ENCODE measurements at regions of chr3 and their contacts with region 1.

Region 1: GRCh38 chr3:71725279-71725991 is at the start of gene EIF4E3:
- DNase-seq: peak; percentile 52
- ATAC-seq: peak; percentile 34
- H3K4me3 Mint-ChIP-seq: peak within 1 kb of the TSS; percentile 78
- H3K27ac Mint-ChIP-seq: no peak within 1 kb of the TSS
- H3K4me1 Mint-ChIP-seq: peaks cover 40% of the 10 kb centered on the region
- H3K27me3 Mint-ChIP-seq: peaks cover 35% of the 10 kb centered on the region
- CTCF ChIP-seq: no peak
- total RNA-seq, gene EIF4E3: 14.0 to 16.5 TPM (median 14.3 TPM) in 3 replicates

Region 2: GRCh38 chr3:71710906-71711494 is 14.4 kb before region 1 on chr3:
- CTCF ChIA-PET with region 1: interaction called, 19 read pairs
- POLR2A ChIA-PET with region 1: no interaction called
- DNase-seq: no peak
- ATAC-seq: peak; percentile 84
- H3K4me3 Mint-ChIP-seq: no peak overlapping the region
- H3K27ac Mint-ChIP-seq: no peak overlapping the region
- H3K4me1 Mint-ChIP-seq: peaks cover 3% of the 10 kb centered on the region; the same call in 1 of the 2 replicates
- H3K27me3 Mint-ChIP-seq: no peaks in the 10 kb centered on the region; the same call in 1 of the 2 replicates
- CTCF ChIP-seq: peak; percentile 42

Region 3: GRCh38 chr3:71763426-71763825 is 38.0 kb after region 1 on chr3:
- CTCF ChIA-PET with region 1: interaction called, 12 read pairs
- POLR2A ChIA-PET with region 1: no interaction called
- DNase-seq: no peak
- ATAC-seq: no peak
- H3K4me3 Mint-ChIP-seq: no peak overlapping the region
- H3K27ac Mint-ChIP-seq: no peak overlapping the region
- H3K4me1 Mint-ChIP-seq: peaks cover 6% of the 10 kb centered on the region
- H3K27me3 Mint-ChIP-seq: peaks cover 8% of the 10 kb centered on the region
- CTCF ChIP-seq: no peak

Region 4: GRCh38 chr3:71803248-71803647 is 77.8 kb after region 1 on chr3:
- CTCF ChIA-PET with region 1: interaction called, 13 read pairs
- POLR2A ChIA-PET with region 1: no interaction called
- DNase-seq: no peak
- ATAC-seq: peak; percentile 74
- H3K4me3 Mint-ChIP-seq: no peak overlapping the region
- H3K27ac Mint-ChIP-seq: no peak overlapping the region
- H3K4me1 Mint-ChIP-seq: peaks cover 42% of the 10 kb centered on the region
- H3K27me3 Mint-ChIP-seq: peaks cover 6% of the 10 kb centered on the region
- CTCF ChIP-seq: no peak

Region 5: GRCh38 chr3:71859123-71859519 is 133.7 kb after region 1 on chr3:
- CTCF ChIA-PET with region 1: interaction called, 53 read pairs
- POLR2A ChIA-PET with region 1: interaction called, 4 read pairs
- DNase-seq: no peak
- ATAC-seq: peak; percentile 74
- H3K4me3 Mint-ChIP-seq: no peak overlapping the region
- H3K27ac Mint-ChIP-seq: no peak overlapping the region
- H3K4me1 Mint-ChIP-seq: peaks cover 30% of the 10 kb centered on the region
- H3K27me3 Mint-ChIP-seq: no peaks in the 10 kb centered on the region; the same call in 1 of the 2 replicates
- CTCF ChIP-seq: peak; percentile 40; the same call in 1 of the 2 replicates

Region 6: DNA sequence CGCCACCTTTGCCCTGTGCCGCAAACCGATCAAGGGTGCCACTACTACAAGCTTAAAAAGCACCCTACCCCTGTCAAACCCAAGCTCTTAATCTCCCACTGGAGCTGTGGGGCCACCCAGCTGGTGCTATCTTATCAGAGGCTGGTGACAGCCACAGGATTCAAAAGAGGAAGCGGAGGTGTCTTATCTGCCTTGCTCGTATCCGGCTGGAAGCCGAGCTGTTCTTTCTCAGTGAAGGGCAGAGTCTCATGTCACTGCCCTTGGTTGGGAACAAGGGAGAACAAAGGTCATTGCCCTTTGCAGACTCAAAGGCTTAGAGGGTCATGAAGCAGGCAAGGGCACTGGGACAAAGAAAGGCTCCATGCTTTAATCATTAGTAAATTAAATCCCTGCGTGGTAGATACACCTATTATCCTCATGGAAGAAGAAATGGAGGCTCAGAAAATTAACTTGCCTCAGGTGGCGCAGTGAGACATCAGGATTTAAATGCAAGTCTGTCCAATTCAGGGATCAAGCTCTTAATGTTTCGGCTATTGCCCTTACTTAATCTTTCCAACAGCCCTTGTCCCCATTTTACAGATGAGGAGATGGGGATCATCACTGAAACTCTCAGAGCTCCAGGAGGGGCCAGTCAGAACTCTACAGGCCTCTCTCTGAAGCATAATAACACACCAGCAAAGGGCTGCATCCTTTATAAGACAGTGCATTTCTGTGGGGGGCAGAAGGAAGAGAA is 419.5 kb after region 1 on chr3:
- CTCF ChIA-PET with region 1: no interaction called
- POLR2A ChIA-PET with region 1: no interaction called
- DNase-seq: no peak
- ATAC-seq: no peak
- H3K4me3 Mint-ChIP-seq: no peak overlapping the region
- H3K27ac Mint-ChIP-seq: no peak overlapping the region
- H3K4me1 Mint-ChIP-seq: no peaks in the 10 kb centered on the region
- H3K27me3 Mint-ChIP-seq: no peaks in the 10 kb centered on the region
- CTCF ChIP-seq: no peak

Measured in WTC11 (cell line).